BJ (cell line): ENCODE measurements at regions of chr12 and their contacts with region 1.

Region 1: DNA sequence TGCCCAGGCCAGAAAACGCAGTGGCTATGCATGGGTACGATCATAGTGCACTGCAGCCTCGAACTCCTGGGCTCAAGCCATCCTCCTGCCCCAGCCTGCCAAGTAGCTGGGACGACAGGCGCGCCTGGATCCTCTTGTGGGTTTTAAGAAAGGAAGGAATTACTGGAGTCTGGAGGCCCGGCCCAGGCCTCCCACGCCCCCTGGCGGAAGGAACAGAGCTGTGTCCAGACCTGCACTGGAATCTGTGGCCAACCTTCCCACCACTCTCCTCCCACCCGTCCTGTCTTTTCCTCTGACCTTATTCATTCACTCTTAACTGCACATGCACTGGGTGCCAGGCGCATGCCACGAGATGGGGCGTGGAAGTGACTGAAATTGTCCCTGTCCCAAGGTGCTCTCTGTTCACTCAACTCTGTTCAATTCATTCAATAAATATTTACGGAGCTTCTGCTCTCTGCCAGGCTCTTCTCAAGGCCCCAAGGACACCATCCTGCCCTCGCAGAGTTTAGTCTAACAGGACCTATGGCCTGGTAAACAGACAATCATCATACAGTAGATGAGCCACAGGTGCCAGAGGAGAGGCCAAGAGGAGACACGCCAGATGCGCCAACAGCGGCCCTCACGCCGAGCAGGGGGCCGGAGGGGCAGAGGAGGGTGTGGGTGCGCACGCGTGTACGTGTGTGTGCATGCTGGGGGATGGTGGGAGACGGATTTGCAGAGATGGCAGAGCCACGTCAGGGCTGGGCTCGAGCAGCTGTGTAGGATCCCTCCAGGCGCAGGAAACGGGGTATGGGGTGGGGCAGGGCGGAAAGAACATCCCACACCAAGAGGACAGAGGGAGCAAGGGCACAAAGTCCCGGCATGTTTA is 13.7 kb upstream of the TMEM106C start:
- DNase-seq: no peak
- H3K4me3 ChIP-seq: no peak overlapping the region
- H3K27me3 ChIP-seq: no peaks in the 10 kb centered on the region
- CTCF ChIP-seq: peak; percentile 95

Region 2: GRCh38 chr12:47870175-47870781 is 79.4 kb before region 1 on chr12:
- CTCF ChIA-PET with region 1: interaction called, 31 read pairs
- POLR2A ChIA-PET with region 1: interaction called, 3 read pairs
- DNase-seq: peak; percentile 26
- H3K4me3 ChIP-seq: no peak overlapping the region
- H3K27me3 ChIP-seq: no peaks in the 10 kb centered on the region
- CTCF ChIP-seq: peak; percentile 71

Region 3: GRCh38 chr12:47889040-47889439 is 60.6 kb before region 1 on chr12:
- CTCF ChIA-PET with region 1: interaction called, 15 read pairs
- POLR2A ChIA-PET with region 1: no interaction called
- DNase-seq: no peak
- H3K4me3 ChIP-seq: no peak overlapping the region
- H3K27me3 ChIP-seq: no peaks in the 10 kb centered on the region
- CTCF ChIP-seq: no peak

Region 4: GRCh38 chr12:47935184-47935583 is 14.5 kb before region 1 on chr12:
- CTCF ChIA-PET with region 1: interaction called, 17 read pairs
- POLR2A ChIA-PET with region 1: no interaction called
- DNase-seq: peak; percentile 83
- H3K4me3 ChIP-seq: no peak overlapping the region
- H3K27me3 ChIP-seq: peaks cover 6% of the 10 kb centered on the region
- CTCF ChIP-seq: no peak

Region 5: DNA sequence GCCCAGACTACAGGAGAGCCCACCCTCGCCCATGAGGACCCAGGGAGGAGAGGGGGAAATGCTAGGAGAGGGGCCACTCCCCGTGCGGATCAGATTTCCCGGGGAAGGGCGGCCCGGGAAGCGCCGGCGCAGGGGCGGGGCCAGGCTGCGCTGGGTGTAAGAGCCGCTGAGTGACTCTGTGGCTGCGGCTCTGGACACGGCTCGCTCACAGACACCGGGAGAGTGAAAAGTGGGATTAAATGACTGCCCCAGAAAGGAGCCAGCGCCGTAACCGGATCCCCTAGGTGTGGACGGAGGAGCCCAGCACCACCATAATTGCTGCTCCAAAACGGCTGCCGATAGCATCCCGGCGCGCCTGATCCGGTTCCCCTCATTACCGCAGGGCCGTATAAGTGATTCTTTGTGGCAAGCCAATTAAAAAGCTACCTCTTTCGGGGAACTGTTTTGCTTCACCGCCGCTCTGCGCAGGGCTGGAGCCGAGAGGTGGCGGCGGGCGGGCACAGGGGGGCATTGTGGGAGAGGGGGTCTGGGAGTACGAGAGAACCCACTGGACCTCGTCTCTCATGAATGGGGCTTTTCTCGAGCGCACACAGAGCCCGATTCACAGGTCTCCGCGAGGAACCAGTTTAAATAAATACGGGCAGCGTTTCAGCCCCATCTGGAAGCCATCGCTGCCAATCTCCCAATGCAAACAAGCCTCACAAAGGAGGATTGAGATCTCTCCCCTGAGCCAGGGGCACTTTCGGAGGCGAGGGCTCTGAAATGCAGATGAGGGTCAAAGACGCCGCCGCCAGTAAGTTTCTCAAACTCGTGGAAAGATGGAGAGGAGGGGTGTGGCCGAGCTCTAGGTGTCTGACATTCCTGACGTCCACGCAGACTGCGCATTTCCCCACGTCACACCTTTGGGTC is 52.1 kb after region 1 on chr12:
- CTCF ChIA-PET with region 1: no interaction called
- POLR2A ChIA-PET with region 1: no interaction called
- DNase-seq: no peak
- H3K4me3 ChIP-seq: peak overlapping the region; percentile 45
- H3K27me3 ChIP-seq: peaks cover 58% of the 10 kb centered on the region
- CTCF ChIP-seq: no peak

Region 6: DNA sequence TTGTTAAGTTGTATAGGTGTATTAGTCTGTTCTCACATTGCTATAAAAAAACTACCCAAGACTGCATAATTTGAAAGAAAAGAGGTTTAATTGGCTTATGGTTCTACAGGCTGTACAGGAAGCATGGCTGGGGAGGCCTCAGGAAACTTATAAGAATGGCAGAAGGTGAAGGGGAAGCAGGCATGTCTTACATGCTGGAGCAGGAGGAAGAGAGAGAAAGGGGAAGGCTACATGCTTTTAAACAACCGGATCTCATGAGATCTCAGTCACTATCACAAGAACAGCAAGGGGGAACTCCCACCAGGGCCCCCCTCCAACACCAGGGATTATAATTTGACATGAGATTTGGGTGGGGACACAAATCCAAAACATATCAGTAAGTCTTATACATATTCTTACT is 313.9 kb after region 1 on chr12:
- CTCF ChIA-PET with region 1: no interaction called
- POLR2A ChIA-PET with region 1: no interaction called
- DNase-seq: no peak
- H3K4me3 ChIP-seq: no peak overlapping the region
- H3K27me3 ChIP-seq: peaks cover 3% of the 10 kb centered on the region
- CTCF ChIP-seq: no peak